GM18951 (cell line): ENCODE measurements at regions of chr18 and their contacts with region 1.

Region 1: GRCh38 chr18:35580701-35581539 is 620 bp upstream of the GALNT1 start:
- POLR2A ChIP-seq: no peak

Region 2: DNA sequence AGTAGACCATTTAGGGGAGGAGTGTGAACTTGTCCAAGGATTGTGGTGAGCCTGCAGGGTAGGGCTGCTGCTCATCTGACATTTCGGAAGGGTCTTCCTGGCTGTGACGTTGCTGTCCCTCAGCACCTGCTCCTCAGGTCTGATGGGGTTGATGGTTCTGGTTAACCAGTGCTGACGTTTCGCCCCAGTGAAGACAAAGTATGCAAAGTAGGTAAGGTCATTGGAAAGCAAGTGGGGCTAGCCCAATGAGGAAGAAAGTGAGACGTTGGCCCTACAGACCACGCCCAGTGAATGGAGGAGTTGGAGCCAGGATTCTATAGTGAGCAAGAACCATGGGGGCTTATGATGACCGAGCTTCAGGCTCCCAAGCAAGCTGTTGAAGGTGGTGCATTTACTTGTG is 170.4 kb before region 1 on chr18:
- in situ Hi-C with region 1: loop called (anchors 5 kb)
- POLR2A ChIP-seq: no peak

Region 3: GRCh38 chr18:35703043-35703688 is 122.2 kb after region 1 on chr18:
- in situ Hi-C with region 1: loop called (anchors 10 kb)
- POLR2A ChIP-seq: no peak

Region 4: DNA sequence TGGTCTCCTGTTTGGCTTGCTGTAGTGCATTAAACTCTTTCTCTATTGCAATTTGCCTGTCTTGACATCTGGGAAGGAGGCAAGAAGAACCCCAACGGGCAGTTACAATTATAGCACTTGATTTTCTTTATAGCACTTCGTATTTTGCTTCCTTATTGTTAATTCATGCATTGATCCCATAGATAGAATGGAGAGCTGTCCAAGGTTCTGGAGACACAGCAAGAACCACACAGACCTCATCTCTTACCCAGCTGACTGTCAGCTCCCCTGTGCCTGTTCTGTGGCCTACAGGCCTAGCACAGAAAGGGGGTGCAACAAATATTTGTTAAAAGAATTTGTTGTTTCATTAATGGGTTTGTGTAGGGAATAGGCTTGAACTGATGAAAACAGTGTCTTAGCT is 195.0 kb after region 1 on chr18:
- in situ Hi-C with region 1: no loop called
- POLR2A ChIP-seq: no peak

Region 5: GRCh38 chr18:35811896-35812295 is 231.0 kb after region 1 on chr18:
- in situ Hi-C with region 1: no loop called
- POLR2A ChIP-seq: no peak